HEK293 (cell line): ENCODE measurements at regions of chr14 and their contacts with region 1.

Region 1: GRCh38 chr14:95993768-95994592 is 45.2 kb upstream of the C14orf132 start:
- H3K4me3 ChIP-seq: no peak overlapping the region
- H3K27ac ChIP-seq: no peak overlapping the region
- H3K4me1 ChIP-seq: no peaks in the 10 kb centered on the region
- CTCF ChIP-seq: peak; percentile 65

Region 2: DNA sequence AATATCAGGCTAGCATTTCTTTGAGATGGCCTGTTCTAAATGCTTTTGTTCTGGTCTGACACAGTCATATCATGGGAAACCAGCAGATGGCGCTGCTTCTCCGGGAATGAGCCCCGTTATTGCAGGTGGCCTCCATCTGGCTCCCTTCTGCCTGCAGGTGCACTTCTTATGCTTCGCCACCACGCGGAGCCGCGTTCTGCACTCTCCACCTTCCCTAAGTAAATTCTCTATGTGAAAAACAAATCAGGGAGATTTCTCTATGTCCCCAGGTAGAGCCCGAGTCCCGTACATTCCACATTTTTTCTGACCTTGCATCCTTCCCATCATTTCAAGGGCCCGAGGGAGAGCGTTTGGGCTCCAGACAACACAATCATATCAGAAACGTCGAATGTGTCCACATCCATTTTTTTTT is 433.0 kb before region 1 on chr14:
- CTCF ChIA-PET with region 1: interaction called, 117 read pairs
- POLR2A ChIA-PET with region 1: no interaction called
- H3K4me3 ChIP-seq: no peak overlapping the region
- H3K27ac ChIP-seq: no peak overlapping the region
- H3K4me1 ChIP-seq: no peaks in the 10 kb centered on the region
- CTCF ChIP-seq: peak; percentile 96

Region 3: GRCh38 chr14:95979339-95980042 is 14.5 kb before region 1 on chr14:
- CTCF ChIA-PET with region 1: no interaction called
- POLR2A ChIA-PET with region 1: no interaction called
- H3K4me3 ChIP-seq: no peak overlapping the region
- H3K27ac ChIP-seq: no peak overlapping the region
- H3K4me1 ChIP-seq: no peaks in the 10 kb centered on the region
- CTCF ChIP-seq: no peak